HEK293 (cell line): ENCODE measurements at regions of chr1 and their contacts with region 1.

Region 1: GRCh38 chr1:233518349-233518748 is 95.6 kb upstream of the KCNK1 start:
- H3K4me3 ChIP-seq: no peak overlapping the region
- H3K27ac ChIP-seq: no peak overlapping the region
- H3K4me1 ChIP-seq: no peaks in the 10 kb centered on the region
- CTCF ChIP-seq: no peak

Region 2: DNA sequence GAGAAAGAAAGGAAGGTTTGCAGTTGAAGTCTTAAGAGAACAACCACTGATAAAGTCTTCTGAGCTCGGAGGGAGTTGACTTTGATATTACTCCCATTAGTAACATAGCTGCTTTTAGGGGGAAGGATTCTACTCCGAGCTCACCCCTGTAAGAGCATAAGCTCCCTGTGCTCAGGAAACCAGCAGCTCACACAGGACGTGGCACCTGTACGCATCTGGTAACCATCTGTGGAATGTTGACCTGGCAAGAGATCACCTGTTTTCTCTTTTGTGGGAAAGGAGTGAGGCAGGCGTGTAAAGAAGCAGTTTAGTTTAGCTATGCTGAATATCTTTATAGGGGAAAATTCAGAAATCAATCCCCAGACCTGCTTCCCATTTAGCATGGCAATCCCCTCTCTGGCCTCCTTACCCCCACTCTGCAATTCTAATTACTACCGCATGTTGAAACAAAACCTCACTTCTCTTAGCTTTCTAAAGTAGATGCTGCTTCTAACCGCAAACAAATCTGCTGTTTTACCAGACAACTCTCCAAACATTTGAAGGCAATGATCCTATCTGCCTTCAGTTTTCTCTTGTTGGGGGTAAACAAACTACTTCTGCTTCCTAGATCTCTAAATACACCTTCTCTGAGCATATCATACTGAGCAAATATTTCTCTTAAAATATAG is 26.3 kb before region 1 on chr1:
- CTCF ChIA-PET with region 1: interaction called, 10 read pairs
- POLR2A ChIA-PET with region 1: no interaction called
- H3K4me3 ChIP-seq: no peak overlapping the region
- H3K27ac ChIP-seq: no peak overlapping the region
- H3K4me1 ChIP-seq: no peaks in the 10 kb centered on the region
- CTCF ChIP-seq: no peak

Region 3: DNA sequence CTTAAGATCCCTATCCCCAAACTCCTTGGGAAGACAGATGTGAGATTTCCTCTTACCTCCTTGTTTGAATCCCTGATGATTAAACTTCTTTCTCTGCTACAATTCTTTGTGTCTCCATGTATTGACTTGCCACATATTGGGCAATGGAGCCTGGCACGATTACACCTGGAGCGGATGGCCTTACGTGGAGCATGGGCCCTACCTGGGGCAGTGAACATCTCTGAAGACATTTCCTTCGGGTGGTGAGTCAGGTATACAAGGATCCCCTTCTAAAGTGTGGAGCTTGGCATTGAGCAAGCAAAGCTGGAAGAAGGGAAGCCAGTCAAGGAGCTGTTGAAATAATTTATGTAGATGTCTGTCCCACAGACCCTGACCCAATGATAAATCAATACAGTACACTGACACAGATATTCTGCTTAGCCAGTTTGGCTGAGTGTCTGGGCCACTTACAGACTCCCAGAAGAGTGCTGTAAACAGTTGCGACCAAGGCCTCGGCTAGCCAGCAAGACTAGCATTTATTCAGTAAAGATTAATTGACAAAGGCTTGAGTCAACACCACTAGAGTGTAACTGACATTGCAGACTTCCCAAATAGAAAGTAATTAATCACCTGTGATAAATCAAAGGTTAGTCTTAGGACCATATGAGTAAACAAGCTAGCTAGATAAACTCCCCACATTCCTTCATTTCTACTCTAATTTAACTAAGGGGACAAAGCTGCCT is 12.5 kb after region 1 on chr1:
- CTCF ChIA-PET with region 1: interaction called, 50 read pairs
- POLR2A ChIA-PET with region 1: no interaction called
- H3K4me3 ChIP-seq: no peak overlapping the region
- H3K27ac ChIP-seq: no peak overlapping the region
- H3K4me1 ChIP-seq: no peaks in the 10 kb centered on the region
- CTCF ChIP-seq: no peak